Body of pancreas (tissue), 4 donors: ENCODE measurements at regions of chr1 and their contacts with region 1.

Region 1: DNA sequence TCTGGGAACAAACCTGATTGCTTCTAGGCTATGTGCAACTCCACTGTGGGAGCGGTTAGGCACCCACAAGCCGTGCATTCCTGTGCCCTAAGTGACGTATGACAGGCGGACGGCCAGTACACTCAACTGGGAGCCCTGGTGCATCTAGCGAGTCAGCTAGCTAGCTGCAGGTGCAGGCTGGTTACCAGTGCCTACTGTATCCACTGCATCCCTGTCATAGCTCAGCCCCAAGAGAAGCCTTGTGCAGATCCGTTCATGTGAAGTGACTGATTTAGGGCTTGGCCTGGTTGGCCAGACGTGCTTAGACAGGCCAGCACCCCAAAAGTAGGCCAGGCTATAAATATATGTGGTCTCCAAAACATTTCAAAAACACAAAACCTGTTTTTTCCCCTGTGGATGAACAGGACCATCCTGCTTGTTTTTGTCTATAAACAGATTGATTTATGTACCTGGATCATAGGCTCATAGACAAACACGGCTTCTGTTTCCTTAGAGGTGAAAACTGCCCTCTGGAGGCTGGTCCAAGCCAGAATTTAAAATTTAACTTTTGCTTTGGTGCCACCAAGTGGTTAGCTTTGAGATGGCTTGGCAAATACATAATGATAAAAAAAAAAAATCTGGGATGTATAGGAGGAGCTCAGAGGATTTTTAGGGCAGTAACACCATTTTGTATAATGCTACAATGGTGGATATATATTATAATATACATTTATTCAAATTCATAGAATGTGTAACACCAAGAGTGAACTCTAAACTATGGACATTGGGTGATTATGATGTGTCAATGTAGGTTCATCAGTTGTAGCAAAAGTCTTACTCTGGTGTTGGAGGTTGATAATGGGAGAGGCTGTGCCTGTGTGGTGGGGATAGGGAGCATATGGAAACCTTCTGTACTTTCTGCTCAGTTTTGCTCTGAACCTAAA is 68.5 kb downstream of the GIPC2 start:
- DNase-seq: peak; percentile 63 to 76 (median 71)
- ATAC-seq: peak; percentile 91
- H3K4me3 ChIP-seq: no peak overlapping the region
- H3K27ac ChIP-seq: peak overlapping the region; percentile 9 to 48 (median 39)
- H3K4me1 ChIP-seq: peaks cover 6% of the 10 kb centered on the region
- H3K27me3 ChIP-seq: no peaks in the 10 kb centered on the region
- CTCF ChIP-seq: peak; percentile 69 to 98 (median 97)
- POLR2A ChIP-seq: no peak

Region 2: GRCh38 chr1:77961392-77961791 is 152.9 kb before region 1 on chr1:
- intact Hi-C with region 1: loop called (anchors 10 kb)
- DNase-seq: no peak
- ATAC-seq: no peak
- H3K4me3 ChIP-seq: no peak overlapping the region
- H3K27ac ChIP-seq: no peak overlapping the region
- H3K4me1 ChIP-seq: peaks cover 29% of the 10 kb centered on the region
- H3K27me3 ChIP-seq: no peaks in the 10 kb centered on the region
- CTCF ChIP-seq: no peak
- POLR2A ChIP-seq: no peak

Region 3: GRCh38 chr1:78054559-78054958 is 59.7 kb before region 1 on chr1:
- intact Hi-C with region 1: loop called (anchors 10 kb)
- DNase-seq: no peak
- ATAC-seq: no peak
- H3K4me3 ChIP-seq: no peak overlapping the region
- H3K27ac ChIP-seq: no peak overlapping the region
- H3K4me1 ChIP-seq: peaks cover 50% of the 10 kb centered on the region
- H3K27me3 ChIP-seq: no peaks in the 10 kb centered on the region
- CTCF ChIP-seq: no peak
- POLR2A ChIP-seq: no peak